IMR-90 (cell line): ENCODE measurements at regions of chr1 and their contacts with region 1.

Region 1: DNA sequence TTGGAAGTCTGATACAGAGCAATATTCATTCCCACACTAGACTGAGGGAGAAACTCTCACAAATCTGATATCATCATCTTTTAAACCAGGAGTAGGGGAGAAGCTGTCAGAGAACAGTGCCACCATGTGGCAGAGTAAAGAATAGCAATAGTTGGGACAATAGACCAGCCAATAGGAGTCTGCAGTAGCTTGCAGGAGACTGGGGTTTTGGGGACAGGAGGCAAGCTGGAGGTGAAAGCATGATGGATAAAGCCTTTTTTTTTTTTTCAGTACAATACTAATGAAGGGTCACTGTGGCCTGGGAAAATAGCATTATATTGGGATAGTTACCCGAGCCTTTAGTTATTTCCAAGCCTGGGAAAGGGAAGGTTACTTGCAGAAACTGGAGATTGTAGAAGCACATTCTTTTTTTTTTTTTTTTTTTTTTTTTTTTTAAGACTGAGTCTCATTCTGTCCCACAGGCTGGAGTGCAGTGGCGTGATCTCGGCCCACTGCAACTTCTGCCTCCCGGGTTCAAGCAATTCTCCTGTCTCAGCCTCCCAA is 120.7 kb downstream of the S1PR1 start:
- DNase-seq: peak; percentile 80
- ATAC-seq: peak; percentile 100
- H3K4me3 ChIP-seq: no peak overlapping the region
- H3K27ac ChIP-seq: no peak overlapping the region
- H3K4me1 ChIP-seq: no peaks in the 10 kb centered on the region
- H3K27me3 ChIP-seq: peaks cover 11% of the 10 kb centered on the region
- CTCF ChIP-seq: peak; percentile 79
- POLR2A ChIP-seq: no peak
- RAD21 ChIP-seq: peak; percentile 66

Region 2: DNA sequence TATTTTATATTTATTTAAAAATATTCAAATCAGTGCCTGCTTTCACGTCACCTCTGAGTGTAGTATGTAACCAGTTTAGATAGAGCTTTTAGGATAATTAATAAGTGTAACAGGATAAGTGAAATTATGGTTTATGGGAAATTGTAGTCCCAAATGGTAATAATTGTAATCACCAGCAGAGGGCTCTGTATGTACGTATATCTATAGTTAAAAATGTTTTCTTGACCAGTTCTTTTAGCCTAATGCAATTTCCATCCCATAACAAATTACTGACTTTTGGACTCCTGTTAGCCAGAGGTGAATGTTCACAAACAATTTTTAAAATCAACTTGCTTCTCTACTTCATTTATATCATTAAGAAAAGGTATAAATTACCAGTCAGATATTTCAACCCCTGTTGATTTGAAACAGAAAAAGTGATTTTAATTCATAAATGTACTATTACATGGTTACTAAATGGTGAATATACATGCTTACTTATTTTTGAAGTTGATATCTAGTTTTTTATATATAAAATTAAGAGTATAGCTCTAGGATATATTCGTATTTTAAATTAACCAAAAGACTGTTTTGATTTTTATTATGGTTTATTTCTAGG is 436.3 kb before region 1 on chr1:
- CTCF ChIA-PET with region 1: no interaction called
- POLR2A ChIA-PET with region 1: no interaction called
- dilution Hi-C with region 1: no loop called
- in situ Hi-C with region 1: no loop called
- intact Hi-C with region 1: loop called (anchors 1 kb)
- DNase-seq: peak; percentile 65
- ATAC-seq: peak; percentile 62
- H3K4me3 ChIP-seq: no peak overlapping the region
- H3K27ac ChIP-seq: no peak overlapping the region
- H3K4me1 ChIP-seq: no peaks in the 10 kb centered on the region
- H3K27me3 ChIP-seq: no peaks in the 10 kb centered on the region
- CTCF ChIP-seq: peak; percentile 71
- POLR2A ChIP-seq: no peak
- RAD21 ChIP-seq: peak; percentile 77

Region 3: DNA sequence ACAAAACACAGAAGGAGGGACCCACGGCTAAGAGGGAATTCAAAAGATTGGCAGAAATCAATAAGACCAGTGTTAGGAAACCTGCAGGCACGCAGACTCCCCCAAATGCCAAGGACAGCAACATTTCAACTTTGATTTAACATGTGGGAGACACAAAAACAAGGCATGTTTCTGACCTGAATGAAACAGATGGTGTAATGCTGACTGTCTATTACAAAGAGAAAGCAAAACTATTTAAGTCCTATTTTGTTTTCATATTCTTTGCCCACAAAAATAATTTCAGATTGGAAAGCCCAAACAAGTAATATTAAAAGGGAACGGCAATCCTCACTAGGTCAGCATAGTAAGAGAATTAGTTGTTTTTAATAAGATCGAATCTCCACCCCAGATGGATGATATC is 12.8 kb before region 1 on chr1:
- CTCF ChIA-PET with region 1: interaction called, 10 read pairs
- POLR2A ChIA-PET with region 1: no interaction called
- dilution Hi-C with region 1: no loop called
- in situ Hi-C with region 1: no loop called
- intact Hi-C with region 1: no loop called
- DNase-seq: no peak
- ATAC-seq: no peak
- H3K4me3 ChIP-seq: no peak overlapping the region
- H3K27ac ChIP-seq: no peak overlapping the region
- H3K4me1 ChIP-seq: no peaks in the 10 kb centered on the region
- H3K27me3 ChIP-seq: no peaks in the 10 kb centered on the region; the same call in 1 of the 2 replicates
- CTCF ChIP-seq: no peak
- POLR2A ChIP-seq: no peak
- RAD21 ChIP-seq: no peak

Region 4: GRCh38 chr1:101496109-101496508 is 138.6 kb after region 1 on chr1:
- CTCF ChIA-PET with region 1: no interaction called
- POLR2A ChIA-PET with region 1: no interaction called
- dilution Hi-C with region 1: no loop called
- in situ Hi-C with region 1: no loop called
- intact Hi-C with region 1: no loop called
- DNase-seq: no peak
- ATAC-seq: no peak
- H3K4me3 ChIP-seq: no peak overlapping the region
- H3K27ac ChIP-seq: no peak overlapping the region
- H3K4me1 ChIP-seq: no peaks in the 10 kb centered on the region
- H3K27me3 ChIP-seq: no peaks in the 10 kb centered on the region
- CTCF ChIP-seq: no peak
- POLR2A ChIP-seq: no peak
- RAD21 ChIP-seq: no peak

Region 5: DNA sequence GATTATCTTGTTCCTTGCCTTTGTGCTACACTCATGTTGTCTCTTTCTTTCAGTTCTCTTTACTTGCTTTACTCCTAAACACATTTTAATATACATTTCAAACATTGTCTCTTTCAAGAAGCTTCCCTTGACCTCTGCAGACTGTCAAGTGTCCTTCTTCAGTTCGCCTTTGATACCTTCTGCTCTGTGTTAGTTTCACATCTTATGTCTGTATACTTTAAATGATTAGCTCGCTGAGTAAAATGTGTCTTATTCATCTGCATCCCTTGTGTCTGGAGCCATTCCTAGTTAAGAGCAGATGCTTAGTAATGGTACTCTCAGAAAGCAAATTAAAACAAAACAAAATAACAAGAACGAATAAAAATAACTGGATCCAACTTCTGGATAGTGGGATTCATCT is 182.6 kb after region 1 on chr1:
- CTCF ChIA-PET with region 1: no interaction called
- POLR2A ChIA-PET with region 1: no interaction called
- dilution Hi-C with region 1: no loop called
- in situ Hi-C with region 1: no loop called
- intact Hi-C with region 1: no loop called
- DNase-seq: no peak
- ATAC-seq: no peak
- H3K4me3 ChIP-seq: no peak overlapping the region
- H3K27ac ChIP-seq: no peak overlapping the region
- H3K4me1 ChIP-seq: no peaks in the 10 kb centered on the region
- H3K27me3 ChIP-seq: no peaks in the 10 kb centered on the region
- CTCF ChIP-seq: no peak
- POLR2A ChIP-seq: no peak
- RAD21 ChIP-seq: no peak

Region 6: GRCh38 chr1:102097458-102097857 is 739.9 kb after region 1 on chr1:
- CTCF ChIA-PET with region 1: no interaction called
- POLR2A ChIA-PET with region 1: no interaction called
- dilution Hi-C with region 1: no loop called
- in situ Hi-C with region 1: no loop called
- intact Hi-C with region 1: no loop called
- DNase-seq: no peak
- ATAC-seq: no peak
- H3K4me3 ChIP-seq: no peak overlapping the region
- H3K27ac ChIP-seq: no peak overlapping the region
- H3K4me1 ChIP-seq: no peaks in the 10 kb centered on the region
- H3K27me3 ChIP-seq: no peaks in the 10 kb centered on the region
- CTCF ChIP-seq: no peak
- POLR2A ChIP-seq: no peak
- RAD21 ChIP-seq: no peak